A549 (cell line): ENCODE measurements at regions of chr19 and their contacts with region 1.

Region 1: GRCh38 chr19:10946964-10947657 is 13.7 kb upstream of the SMARCA4 start:
- DNase-seq: peak in 1 of 2 experiments; percentile 32
- ATAC-seq: peak in 1 of 2 experiments; percentile 20; a peak in 3 of 6 replicates
- H3K4me3 ChIP-seq: no peak overlapping the region
- H3K27ac ChIP-seq: peak overlapping the region; percentile 36 to 76; a peak in 4 of 6 replicates
- H3K4me1 ChIP-seq: peaks cover 14% of the 10 kb centered on the region; the same call in 2 of the 3 replicates
- CTCF ChIP-seq: no peak
- EP300 ChIP-seq: no peak; a peak in 1 of 5 replicates
- POLR2A ChIP-seq: no peak
- RAD21 ChIP-seq: no peak

Region 2: GRCh38 chr19:10812196-10812595 is 134.9 kb before region 1 on chr19:
- CTCF ChIA-PET with region 1: no interaction called
- POLR2A ChIA-PET with region 1: interaction called, 10 read pairs
- DNase-seq: no peak
- ATAC-seq: no peak
- H3K4me3 ChIP-seq: no peak overlapping the region
- H3K27ac ChIP-seq: peak overlapping the region; percentile 80 to 90; a peak in 5 of 6 replicates
- H3K4me1 ChIP-seq: peaks cover 14% of the 10 kb centered on the region
- CTCF ChIP-seq: no peak
- EP300 ChIP-seq: no peak
- POLR2A ChIP-seq: no peak
- RAD21 ChIP-seq: no peak